B cell (primary cell): ENCODE measurements at regions of chr18 and their contacts with region 1.

Region 1: DNA sequence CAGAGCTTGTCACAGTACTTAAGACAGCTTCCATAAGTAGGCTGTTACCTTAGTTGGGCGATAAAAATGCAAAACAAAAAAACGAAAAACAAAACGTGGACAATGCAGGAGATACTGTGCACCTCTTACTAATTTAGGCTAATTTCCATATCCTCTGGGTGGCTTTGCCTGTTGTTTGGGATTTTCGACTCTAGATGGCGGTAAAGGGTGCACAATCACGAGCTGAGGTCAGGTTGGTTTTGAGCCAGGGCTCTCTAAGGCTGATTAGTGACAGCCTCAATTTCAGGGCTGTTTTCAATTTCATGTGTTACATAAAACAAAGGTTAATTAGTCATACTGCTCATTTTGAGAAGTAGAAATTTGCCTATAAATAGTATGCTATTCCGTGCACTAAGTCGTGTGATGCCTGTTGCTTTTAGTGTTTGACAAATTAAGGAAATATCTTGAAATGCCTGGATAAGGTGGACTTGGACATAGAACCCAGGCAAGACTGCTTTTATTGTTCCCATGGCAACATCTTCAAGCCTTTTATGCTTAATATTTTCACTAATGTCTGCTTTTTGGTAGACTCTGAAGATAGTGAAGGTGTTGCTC is 493.1 kb downstream of the SOCS6 start:
- DNase-seq: peak; percentile 26
- ATAC-seq: peak; percentile 45
- H3K4me3 ChIP-seq: no peak overlapping the region
- H3K4me3 Mint-ChIP-seq: no peak overlapping the region
- H3K27ac ChIP-seq: no peak overlapping the region
- H3K27ac Mint-ChIP-seq: no peak overlapping the region
- H3K4me1 ChIP-seq: no peaks in the 10 kb centered on the region
- H3K4me1 Mint-ChIP-seq: no peaks in the 10 kb centered on the region
- H3K27me3 ChIP-seq: no peaks in the 10 kb centered on the region
- H3K27me3 Mint-ChIP-seq: no peaks in the 10 kb centered on the region
- CTCF ChIP-seq: peak; percentile 42

Region 2: DNA sequence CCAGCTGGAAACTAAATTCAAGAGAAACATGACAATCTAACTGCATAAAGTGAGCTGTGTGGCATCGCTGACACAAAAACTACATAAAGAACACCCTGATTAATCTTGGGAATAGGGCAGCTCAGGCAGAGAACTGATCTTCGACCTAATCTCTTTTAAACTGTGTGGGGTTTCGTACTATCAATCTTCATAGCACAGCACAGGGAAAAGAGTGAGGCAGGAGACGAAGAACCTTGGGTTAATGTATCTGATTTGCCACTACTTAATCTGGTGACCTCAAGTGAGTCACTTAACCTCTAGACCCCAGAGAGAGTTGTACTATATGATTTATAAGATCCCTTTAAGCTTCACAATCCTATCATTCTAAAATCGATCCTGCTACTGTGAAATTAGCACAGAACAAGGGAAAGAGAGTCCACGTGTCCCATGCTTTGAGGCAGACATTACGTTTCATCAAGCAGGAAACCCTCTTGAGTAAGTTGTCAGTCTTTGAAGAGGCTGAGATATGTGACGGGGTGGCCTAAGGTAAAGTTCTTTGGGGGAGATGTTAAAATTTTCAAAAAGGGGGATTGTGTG is 26.6 kb after region 1 on chr18:
- CTCF ChIA-PET with region 1: no interaction called
- POLR2A ChIA-PET with region 1: no interaction called
- intact Hi-C with region 1: no loop called
- DNase-seq: no peak
- ATAC-seq: no peak
- H3K4me3 ChIP-seq: no peak overlapping the region
- H3K4me3 Mint-ChIP-seq: no peak overlapping the region
- H3K27ac ChIP-seq: no peak overlapping the region
- H3K27ac Mint-ChIP-seq: no peak overlapping the region
- H3K4me1 ChIP-seq: no peaks in the 10 kb centered on the region
- H3K4me1 Mint-ChIP-seq: no peaks in the 10 kb centered on the region
- H3K27me3 ChIP-seq: no peaks in the 10 kb centered on the region
- H3K27me3 Mint-ChIP-seq: no peaks in the 10 kb centered on the region
- CTCF ChIP-seq: no peak

Region 3: GRCh38 chr18:72672364-72673184 is 1890.6 kb after region 1 on chr18:
- CTCF ChIA-PET with region 1: no interaction called
- POLR2A ChIA-PET with region 1: no interaction called
- intact Hi-C with region 1: loop called (anchors 5 kb)
- DNase-seq: peak; percentile 25
- ATAC-seq: no peak
- H3K4me3 ChIP-seq: no peak overlapping the region
- H3K4me3 Mint-ChIP-seq: no peak overlapping the region
- H3K27ac ChIP-seq: no peak overlapping the region
- H3K27ac Mint-ChIP-seq: no peak overlapping the region
- H3K4me1 ChIP-seq: no peaks in the 10 kb centered on the region
- H3K4me1 Mint-ChIP-seq: no peaks in the 10 kb centered on the region
- H3K27me3 ChIP-seq: peaks cover 0 to 3% (median 0%) of the 10 kb centered on the region in 4 experiments
- H3K27me3 Mint-ChIP-seq: peaks cover 8% of the 10 kb centered on the region
- CTCF ChIP-seq: peak; percentile 81